ENCODE measurements at regions of chr12 and their contacts with region 1.

Region 1: DNA sequence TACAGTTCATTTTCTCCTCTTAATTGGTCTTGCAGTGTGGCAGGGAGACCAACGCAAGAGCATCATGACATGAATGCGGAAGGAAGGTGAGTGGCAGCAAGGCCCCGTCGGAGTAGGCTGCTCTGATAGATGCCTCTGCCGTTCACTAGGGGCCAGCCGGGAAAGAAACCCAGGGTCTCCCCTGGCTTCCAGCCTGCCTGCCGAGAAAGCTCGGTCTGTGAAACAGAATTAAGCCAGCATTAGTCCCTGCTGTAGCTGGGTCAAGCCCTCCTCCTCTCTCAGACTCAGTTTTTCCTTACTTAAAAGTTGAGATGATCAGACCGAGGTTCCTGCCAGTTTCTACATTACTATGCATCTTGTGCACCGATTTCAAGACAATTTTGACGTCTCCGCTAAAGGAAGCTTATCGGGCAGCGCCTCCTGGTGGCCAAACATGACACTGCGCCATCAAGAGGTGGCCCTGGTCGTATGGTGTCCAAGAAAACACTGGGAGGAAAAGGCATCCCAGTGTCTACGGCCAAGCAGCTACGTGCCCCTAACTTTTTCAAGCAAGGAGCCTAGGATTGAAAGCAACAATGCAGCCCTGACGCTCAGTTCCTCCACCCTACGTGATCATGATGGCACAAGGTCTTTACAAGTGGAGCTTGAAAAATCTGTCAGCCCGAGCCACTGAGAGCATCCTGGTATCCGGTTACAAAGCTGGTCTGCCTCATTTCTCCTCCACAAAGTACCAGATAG is 131.6 kb downstream of the KSR2 start:
- DNase-seq: peak; percentile 95
- H3K4me3 ChIP-seq: no peak overlapping the region
- H3K27ac ChIP-seq: no peak overlapping the region
- H3K4me1 ChIP-seq: peaks cover 0 to 6% (median 2%) of the 10 kb centered on the region in 4 donors
- H3K27me3 ChIP-seq: peaks cover 0 to 76% (median 6%) of the 10 kb centered on the region in 4 donors
- CTCF ChIP-seq: peak; percentile 84 to 98 (median 90)
- EP300 ChIP-seq: no peak
- POLR2A ChIP-seq: no peak

Region 2: DNA sequence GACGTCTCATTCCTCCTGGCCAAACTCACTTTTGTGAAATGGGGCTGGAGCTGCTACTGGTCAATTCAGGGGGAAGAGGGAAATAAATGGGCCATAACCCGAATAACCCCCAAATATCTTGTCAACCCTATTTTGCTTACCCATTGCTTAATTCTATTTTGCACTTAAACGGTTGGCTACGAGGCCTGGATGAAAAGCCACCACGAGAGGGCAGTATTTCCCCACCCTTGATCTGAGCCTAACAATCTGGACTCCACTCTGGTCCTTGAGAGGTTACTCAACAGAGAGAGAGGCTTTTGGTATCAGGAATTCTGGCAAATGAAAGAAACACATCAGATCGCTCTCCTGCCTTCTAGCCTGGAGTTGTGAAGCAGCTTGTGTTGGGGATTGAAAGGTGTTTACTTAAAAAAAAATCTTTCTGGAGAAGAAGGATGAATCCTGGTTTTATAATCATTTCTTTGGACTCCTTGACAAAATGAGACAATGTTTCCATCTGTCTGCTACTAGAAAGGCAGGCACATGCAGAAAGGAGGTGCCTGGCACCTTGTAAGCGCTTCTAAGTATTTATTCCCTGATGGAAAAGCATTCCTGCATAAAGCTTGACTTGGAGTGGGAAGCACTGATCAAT is 624.5 kb before region 1 on chr12:
- intact Hi-C with region 1: loop called (anchors 2 kb)
- DNase-seq: no peak
- H3K4me3 ChIP-seq: no peak overlapping the region
- H3K27ac ChIP-seq: no peak overlapping the region
- H3K4me1 ChIP-seq: peaks cover 0 to 8% (median 3%) of the 10 kb centered on the region in 4 donors
- H3K27me3 ChIP-seq: peaks cover 0 to 41% (median 0%) of the 10 kb centered on the region in 4 donors
- CTCF ChIP-seq: peak; percentile 80 to 92 (median 83)
- EP300 ChIP-seq: no peak
- POLR2A ChIP-seq: no peak

Region 3: GRCh38 chr12:117367011-117367638 is 470.0 kb before region 1 on chr12:
- intact Hi-C with region 1: loop called (anchors 2 kb)
- DNase-seq: no peak
- H3K4me3 ChIP-seq: no peak overlapping the region
- H3K27ac ChIP-seq: no peak overlapping the region
- H3K4me1 ChIP-seq: no peaks in the 10 kb centered on the region
- H3K27me3 ChIP-seq: peaks cover 0 to 94% (median 5%) of the 10 kb centered on the region in 4 donors
- CTCF ChIP-seq: peak; percentile 79 to 93 (median 86)
- EP300 ChIP-seq: no peak
- POLR2A ChIP-seq: no peak

Measured in esophagus muscularis mucosa (tissue), 4 donors.